Ascending aorta (tissue), 2 donors: ENCODE measurements at regions of chr1 and their contacts with region 1.

Region 1: DNA sequence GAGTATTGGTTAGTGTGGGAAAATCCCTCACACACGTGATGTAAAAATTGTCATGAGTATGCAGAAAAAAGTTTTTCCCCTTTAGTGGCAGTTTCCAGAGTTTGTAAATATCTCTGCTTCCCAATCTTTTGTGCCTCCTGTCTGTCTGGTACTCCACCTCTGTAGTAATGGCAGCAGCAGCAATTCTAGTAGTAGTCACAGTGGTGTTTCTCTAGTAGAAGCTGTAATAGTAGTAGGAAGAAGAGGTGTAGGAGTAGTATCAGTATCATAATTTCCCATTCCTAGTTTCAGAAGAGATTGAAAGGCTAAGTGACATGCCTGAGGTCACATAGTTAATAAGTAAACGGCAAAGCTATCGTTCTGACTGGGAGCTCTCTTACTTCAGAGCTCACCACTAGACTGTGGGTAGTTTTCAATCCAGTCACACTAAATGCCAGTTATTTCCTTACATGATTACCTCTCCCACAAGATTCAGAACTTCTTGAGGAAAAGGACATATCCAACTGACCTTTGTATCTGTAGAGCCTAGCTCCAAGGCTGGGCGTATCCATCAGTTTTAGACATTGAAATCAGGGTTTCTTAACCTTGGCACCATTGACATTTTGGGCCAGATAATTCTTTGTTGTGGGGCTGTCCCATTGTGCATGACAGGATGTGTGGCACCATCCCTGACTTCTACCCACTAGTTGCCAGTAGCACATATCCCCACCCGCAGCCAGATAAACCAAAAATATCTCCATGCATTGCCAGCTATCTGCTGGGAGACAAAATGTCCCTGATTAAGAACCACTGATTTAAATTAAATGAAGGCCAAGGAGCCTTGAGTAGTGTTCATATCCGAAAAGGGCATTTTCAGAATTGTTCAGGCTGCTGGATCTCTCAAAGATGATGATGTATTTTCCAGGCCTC is 135.9 kb downstream of the FGGY start:
- DNase-seq: no peak
- H3K4me3 ChIP-seq: no peak overlapping the region
- H3K27ac ChIP-seq: peak overlapping the region; percentile 67 to 72
- H3K4me1 ChIP-seq: peaks cover 9 to 30% of the 10 kb centered on the region in 2 donors
- H3K27me3 ChIP-seq: no peaks in the 10 kb centered on the region
- CTCF ChIP-seq: no peak

Region 2: DNA sequence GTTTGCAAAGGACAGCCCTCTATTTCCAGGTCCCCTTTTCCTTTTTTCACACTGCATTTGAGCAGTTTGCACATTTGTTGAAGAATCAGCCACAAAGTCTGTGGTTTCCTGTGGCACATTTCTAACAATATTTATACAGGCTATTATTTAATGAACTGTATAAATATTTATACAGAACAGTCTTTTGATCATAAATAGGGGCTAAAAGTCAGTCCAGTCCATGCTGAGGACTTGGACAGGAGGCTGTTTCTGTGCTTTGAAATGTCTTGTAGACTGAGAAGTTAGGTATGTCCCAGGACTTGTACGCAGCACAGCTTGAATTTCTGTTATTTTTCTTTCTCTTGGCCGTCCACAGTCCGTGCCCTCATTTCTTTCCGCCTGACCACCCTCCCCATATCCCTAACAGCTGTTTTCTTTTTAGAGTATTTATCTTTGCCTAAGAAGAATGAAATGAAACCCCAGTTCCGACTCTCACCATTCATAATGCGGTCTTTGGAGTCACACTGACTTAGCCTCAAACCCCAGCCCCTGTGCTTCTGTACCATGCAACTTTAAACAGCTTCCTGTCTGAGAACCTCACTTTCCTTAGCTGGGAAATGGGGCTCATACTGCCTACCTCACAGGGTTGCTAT is 116.2 kb before region 1 on chr1:
- intact Hi-C with region 1: no loop called
- DNase-seq: no peak
- H3K4me3 ChIP-seq: peak overlapping the region; percentile 40 to 48
- H3K27ac ChIP-seq: peak overlapping the region; percentile 48 to 57
- H3K4me1 ChIP-seq: peaks cover 0 to 9% of the 10 kb centered on the region in 2 donors
- H3K27me3 ChIP-seq: no peaks in the 10 kb centered on the region
- CTCF ChIP-seq: no peak

Region 3: GRCh38 chr1:59360170-59360569 is 72.6 kb before region 1 on chr1:
- intact Hi-C with region 1: no loop called
- DNase-seq: peak in 1 of 2 donors; percentile 61
- H3K4me3 ChIP-seq: no peak overlapping the region
- H3K27ac ChIP-seq: no peak overlapping the region
- H3K4me1 ChIP-seq: peaks cover 0 to 3% of the 10 kb centered on the region in 2 donors
- H3K27me3 ChIP-seq: no peaks in the 10 kb centered on the region
- CTCF ChIP-seq: no peak

Region 4: DNA sequence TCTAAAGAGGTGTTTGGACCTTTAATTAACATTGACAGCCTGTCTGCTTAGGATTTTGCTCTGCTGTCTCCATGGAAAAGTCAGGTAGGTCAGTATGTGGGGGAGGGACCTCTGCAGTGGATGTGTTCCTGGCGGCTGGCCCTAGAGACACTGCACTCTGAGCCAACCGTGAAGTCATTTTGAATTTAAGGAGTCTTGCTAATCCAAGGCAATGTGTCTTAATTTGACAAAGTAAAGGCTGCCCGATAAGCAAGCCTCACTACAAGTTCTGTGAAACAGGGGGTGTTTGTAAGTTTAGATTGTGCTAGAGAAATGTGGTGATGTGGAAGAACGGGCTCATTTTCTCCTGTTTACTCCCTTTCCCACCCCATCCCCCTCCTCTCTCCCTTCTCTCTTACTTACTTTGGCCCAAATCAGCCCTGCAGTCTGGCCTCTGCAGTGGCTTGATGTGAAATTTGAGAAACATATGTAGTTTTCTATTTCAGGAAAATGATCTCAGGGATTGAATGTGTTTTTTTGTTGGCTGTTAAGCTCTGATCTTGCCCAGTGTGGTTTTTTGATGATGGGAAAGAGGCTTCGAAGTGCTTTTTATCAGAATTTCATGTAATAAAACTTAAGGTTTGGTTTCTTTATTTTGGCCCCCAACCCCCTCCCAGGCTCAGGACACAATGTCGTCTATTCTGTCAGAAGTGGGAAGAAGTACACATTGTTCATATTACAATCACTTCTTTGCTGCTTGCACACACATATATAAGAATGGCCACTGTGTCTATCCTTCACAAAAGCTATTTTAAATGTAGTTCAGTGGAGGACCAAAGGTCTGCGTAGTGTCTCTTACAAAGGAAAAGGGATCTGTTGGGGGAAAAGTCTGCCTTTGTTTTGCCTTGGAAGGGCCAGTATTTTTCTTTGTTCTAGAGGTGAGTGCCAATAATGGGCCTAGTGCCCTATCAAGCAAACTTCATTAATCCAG is 39.3 kb before region 1 on chr1:
- intact Hi-C with region 1: loop called (anchors 2 kb)
- DNase-seq: peak; percentile 58 to 94
- H3K4me3 ChIP-seq: no peak overlapping the region
- H3K27ac ChIP-seq: peak overlapping the region; percentile 91 to 93
- H3K4me1 ChIP-seq: peaks cover 7 to 30% of the 10 kb centered on the region in 2 donors
- H3K27me3 ChIP-seq: no peaks in the 10 kb centered on the region
- CTCF ChIP-seq: no peak

Region 5: DNA sequence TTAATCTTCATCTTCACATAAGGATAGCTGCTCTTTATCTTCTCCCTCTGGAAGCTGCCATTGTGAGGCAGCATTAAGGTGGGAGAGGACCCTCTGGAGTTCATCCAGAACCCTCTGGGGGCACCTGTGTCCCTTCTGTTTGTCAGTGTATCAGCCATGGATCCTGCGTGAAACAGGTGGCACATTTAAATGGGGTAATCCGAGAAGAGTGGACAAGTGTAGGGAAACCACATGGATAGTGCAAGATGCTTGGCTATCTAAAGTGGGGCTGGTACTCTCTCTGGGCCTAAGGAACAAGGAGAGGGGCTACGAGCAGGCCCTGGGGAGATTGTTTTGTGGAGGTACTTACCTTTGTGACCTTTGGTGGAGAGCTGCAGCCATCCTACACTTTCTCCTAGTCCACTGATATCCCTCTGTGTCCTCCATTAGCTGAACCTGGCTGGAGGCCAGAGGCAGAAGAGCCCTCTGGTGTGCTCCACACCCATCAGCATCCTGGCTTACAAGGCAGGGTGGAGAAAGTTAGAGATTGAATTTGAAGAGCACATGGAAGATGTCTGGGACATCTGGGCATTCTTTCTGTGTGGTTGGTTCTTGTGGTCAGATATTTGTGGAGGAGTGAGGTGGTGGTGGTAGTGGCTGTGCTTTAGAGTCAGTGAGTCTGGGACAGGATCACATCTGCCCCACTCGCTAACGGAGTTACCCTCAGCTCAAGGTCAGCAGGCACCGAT is 18.2 kb before region 1 on chr1:
- intact Hi-C with region 1: no loop called
- DNase-seq: no peak
- H3K4me3 ChIP-seq: no peak overlapping the region
- H3K27ac ChIP-seq: no peak overlapping the region
- H3K4me1 ChIP-seq: peaks cover 0 to 6% of the 10 kb centered on the region in 2 donors
- H3K27me3 ChIP-seq: no peaks in the 10 kb centered on the region
- CTCF ChIP-seq: no peak

Region 6: DNA sequence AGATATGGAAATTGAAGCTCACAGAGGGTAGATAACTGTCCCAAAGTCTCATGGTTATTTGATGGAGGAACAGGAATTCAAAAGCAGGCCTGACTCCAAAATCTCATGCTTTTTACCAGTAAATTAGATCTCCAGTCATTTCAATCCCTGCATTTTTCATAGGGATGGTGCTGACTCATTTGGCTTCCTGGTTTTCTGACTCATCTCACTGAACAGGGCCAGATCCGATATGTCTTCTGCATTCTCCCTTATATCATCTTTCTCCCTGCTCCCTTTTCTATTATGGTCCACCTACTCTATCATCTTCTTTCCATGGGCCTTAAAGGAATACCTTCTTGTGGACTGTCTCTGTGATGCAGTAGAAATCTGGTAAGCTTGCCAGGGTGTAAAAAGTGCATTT is 51.3 kb after region 1 on chr1:
- intact Hi-C with region 1: no loop called
- DNase-seq: no peak
- H3K4me3 ChIP-seq: no peak overlapping the region
- H3K27ac ChIP-seq: no peak overlapping the region
- H3K4me1 ChIP-seq: no peaks in the 10 kb centered on the region
- H3K27me3 ChIP-seq: no peaks in the 10 kb centered on the region
- CTCF ChIP-seq: no peak